AG04449 (cell line): ENCODE measurements at regions of chr1 and their contacts with region 1.

Region 1: DNA sequence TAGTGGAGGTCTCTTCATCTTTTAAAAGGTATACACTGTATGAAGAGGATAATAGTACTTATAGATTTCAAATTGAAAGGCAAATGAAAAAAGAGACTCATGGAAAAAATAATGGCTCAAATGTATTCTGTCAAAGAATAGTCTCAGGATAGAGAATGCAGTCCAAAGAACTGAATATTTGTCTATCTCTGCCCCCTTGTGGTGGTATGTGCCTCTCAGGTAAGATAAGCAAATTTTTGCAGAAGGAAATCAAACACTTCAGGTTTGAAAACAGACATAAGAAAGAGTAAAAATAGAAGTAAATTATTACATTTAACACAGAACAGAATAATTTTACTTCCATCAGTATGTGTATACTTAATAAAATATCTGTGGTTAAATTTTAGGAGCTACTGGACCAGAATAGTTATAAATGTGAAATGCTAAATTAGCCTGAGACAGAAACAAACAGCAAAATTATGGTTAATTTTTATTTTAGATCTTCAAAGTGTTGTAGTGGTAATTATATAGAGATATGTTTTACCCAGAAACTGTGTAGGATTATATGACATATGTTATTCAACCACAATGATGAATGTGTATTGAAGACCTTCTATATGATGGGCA is 164.4 kb upstream of the PALMD start:
- DNase-seq: no peak
- H3K4me3 ChIP-seq: no peak overlapping the region
- CTCF ChIP-seq: peak; percentile 58

Region 2: DNA sequence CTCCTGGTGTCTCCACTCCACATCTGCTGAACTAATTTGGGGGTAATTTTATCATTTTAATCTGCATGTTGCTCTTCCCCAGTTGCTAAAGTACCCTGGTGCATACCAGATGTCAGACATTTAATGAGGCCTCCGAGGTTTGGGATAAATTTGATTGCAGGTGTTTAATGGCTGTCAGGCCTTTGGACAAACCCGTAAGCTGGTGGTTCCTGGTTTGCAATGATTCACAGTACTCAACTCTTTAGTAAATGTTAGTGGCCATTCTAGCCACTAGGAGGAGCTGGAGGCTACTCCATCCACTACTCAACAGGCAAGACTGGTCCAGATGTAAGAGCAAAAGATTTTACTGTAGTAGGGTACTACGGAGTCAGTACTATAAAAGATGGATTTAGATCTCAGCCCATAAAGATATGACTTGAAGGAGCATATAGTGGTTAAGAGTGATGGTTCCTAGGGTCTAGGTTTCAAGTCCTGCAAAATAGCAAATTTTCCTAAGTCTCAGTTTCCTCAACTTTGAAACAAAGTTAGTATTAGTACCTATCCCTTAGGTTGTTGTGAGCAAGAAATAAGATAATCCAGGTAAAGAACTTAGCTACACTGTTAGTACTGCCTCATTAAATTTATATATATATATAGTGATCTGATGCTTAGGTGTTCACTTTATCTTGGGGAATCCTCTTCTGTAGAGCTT is 687.2 kb before region 1 on chr1:
- CTCF ChIA-PET with region 1: interaction called, 35 read pairs
- POLR2A ChIA-PET with region 1: no interaction called
- DNase-seq: peak; percentile 26
- H3K4me3 ChIP-seq: no peak overlapping the region
- CTCF ChIP-seq: peak; percentile 73

Region 3: DNA sequence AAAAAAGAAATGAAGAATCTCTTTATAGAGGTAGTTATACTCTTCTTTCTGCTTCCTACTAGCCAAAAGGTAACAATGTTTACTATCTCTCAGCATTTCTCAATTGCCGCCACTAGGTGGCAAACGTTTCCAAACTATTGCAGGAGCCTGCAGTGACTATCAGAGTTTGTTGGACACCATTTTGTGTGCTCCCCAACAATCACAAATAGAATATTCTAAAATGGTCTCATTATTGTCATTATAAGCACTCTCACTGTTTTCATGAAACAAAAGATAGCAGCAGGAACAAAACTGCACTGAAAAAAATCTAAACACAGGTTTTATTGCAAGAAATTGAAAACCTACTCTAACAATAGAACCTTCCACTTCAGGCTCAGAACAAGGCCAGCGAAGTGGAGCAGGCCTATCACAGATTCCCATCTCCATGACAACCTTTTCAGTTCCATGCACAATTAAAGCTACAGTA is 301.1 kb before region 1 on chr1:
- CTCF ChIA-PET with region 1: interaction called, 98 read pairs
- POLR2A ChIA-PET with region 1: no interaction called
- DNase-seq: no peak
- H3K4me3 ChIP-seq: no peak overlapping the region
- CTCF ChIP-seq: peak; percentile 60

Region 4: GRCh38 chr1:99496067-99496466 is 14.6 kb after region 1 on chr1:
- CTCF ChIA-PET with region 1: interaction called, 49 read pairs
- POLR2A ChIA-PET with region 1: no interaction called
- DNase-seq: no peak
- H3K4me3 ChIP-seq: no peak overlapping the region
- CTCF ChIP-seq: no peak

Region 5: GRCh38 chr1:99550198-99550597 is 68.7 kb after region 1 on chr1:
- CTCF ChIA-PET with region 1: no interaction called
- POLR2A ChIA-PET with region 1: no interaction called
- DNase-seq: no peak
- H3K4me3 ChIP-seq: no peak overlapping the region
- CTCF ChIP-seq: no peak

Region 6: DNA sequence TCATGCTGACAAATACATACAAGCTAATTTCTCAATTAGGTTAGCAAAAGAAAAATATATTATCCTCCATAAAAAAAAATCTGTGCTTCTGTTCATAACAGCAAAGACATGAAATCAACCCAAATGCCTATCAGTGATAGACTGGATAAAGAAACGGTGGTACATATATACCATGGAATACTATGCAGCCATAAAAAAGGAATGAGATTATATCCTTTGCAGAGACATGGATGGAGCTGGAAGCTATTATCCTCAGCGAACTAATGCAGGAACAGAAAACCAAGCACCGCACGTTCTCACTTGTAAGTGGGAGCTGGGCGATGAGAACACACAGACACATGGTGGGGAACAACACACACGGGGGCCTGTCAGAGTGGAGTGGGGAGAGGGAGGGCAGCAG is 80.5 kb after region 1 on chr1:
- CTCF ChIA-PET with region 1: no interaction called
- POLR2A ChIA-PET with region 1: no interaction called
- DNase-seq: no peak
- H3K4me3 ChIP-seq: no peak overlapping the region
- CTCF ChIP-seq: no peak

Region 7: DNA sequence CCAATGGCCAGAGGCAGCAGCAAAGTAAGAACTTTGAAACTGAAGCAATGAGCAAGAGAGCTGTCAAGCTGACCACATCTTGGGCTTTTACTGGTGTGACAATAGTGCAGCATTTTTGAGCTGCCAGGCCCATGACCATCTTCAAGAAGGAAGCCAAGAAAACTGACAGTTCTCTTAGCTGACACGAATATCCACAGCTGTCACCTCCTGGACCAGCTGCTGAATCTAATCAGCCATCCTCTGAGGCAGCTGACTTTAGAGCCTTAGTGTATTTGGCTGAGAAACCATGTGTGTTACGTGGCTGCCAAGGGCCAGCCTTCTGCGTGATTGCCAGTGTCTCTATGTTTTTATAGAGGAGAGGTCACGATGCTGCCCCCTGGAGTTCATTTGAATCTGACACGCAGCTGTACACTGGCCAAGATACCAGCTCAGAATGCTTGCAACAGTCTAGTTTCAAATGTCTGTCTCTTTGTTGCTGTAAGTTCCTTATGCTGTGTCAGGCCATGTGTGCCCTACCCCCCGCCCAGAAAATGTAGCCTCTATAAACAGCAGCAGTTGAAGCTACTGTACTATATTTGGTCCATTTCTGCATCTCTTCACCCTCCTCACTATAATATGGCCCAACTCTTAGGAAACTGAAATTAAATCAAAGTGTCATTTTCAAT is 204.2 kb after region 1 on chr1:
- CTCF ChIA-PET with region 1: interaction called, 10 read pairs
- POLR2A ChIA-PET with region 1: no interaction called
- DNase-seq: peak; percentile 74
- H3K4me3 ChIP-seq: no peak overlapping the region
- CTCF ChIP-seq: peak; percentile 61

Region 8: GRCh38 chr1:99737016-99737415 is 255.5 kb after region 1 on chr1:
- CTCF ChIA-PET with region 1: interaction called, 13 read pairs
- POLR2A ChIA-PET with region 1: no interaction called
- DNase-seq: peak; percentile 26
- H3K4me3 ChIP-seq: no peak overlapping the region
- CTCF ChIP-seq: peak; percentile 43